Panc1 (cell line): ENCODE measurements at regions of chr16 and their contacts with region 1.

Region 1: DNA sequence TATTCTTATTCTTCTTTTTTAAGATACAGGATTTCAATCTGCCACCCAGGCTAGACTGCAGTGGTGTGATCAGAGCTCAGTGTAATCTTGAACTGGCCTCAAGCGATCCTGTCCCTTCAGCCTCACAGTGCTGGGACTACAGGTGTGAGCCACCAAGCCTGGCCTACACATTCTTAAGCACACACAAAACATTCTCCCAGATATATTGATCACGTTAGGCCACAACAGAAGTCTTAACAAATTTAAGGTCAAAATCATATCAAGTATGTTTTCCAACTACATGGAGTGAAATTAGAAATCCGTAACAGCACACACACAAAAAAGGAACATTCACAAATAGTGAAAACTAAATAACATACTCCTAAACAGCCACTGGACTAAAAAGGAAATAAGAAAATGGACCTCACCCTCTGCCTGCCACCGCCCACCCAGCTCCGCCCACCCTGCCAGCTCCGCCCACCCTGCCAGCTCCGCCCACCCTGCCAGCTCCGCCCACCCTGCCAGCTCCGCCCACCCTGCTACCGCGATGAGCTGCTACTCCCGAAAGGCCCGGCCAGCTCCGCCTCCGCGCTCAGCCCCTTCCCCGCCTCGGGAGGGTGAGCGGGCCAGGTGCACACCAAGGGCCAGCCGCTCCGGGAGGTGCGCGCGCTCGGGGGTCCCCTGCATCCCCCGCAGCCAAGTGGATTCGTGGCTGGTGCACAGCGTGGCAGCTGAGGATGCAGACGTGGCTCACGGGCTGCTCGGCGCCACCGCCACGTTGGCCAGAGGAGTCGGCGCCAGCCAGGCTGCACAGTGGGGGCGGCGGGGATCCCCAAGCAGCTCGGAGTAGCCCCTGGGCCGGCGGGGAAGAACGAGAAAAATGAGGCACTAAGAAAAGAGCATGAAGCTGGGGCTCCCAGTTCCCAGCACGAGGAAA is 41.2 kb downstream of the C16orf87 start:
- DNase-seq: no peak
- ATAC-seq: peak; percentile 98
- H3K4me3 ChIP-seq: peak overlapping the region; percentile 59 to 63
- H3K27ac ChIP-seq: peak overlapping the region; percentile 51; the same call in 1 of the 2 replicates
- H3K4me1 ChIP-seq: no peaks in the 10 kb centered on the region; the same call in 1 of the 2 replicates
- H3K27me3 ChIP-seq: no peaks in the 10 kb centered on the region
- CTCF ChIP-seq: no peak

Region 2: GRCh38 chr16:46673320-46674013 is 116.3 kb before region 1 on chr16:
- CTCF ChIA-PET with region 1: interaction called, 18 read pairs
- POLR2A ChIA-PET with region 1: no interaction called
- in situ Hi-C with region 1: no loop called
- intact Hi-C with region 1: no loop called
- DNase-seq: no peak
- ATAC-seq: peak; percentile 96
- H3K4me3 ChIP-seq: no peak overlapping the region
- H3K27ac ChIP-seq: no peak overlapping the region
- H3K4me1 ChIP-seq: no peaks in the 10 kb centered on the region
- H3K27me3 ChIP-seq: no peaks in the 10 kb centered on the region
- CTCF ChIP-seq: peak; percentile 92

Region 3: DNA sequence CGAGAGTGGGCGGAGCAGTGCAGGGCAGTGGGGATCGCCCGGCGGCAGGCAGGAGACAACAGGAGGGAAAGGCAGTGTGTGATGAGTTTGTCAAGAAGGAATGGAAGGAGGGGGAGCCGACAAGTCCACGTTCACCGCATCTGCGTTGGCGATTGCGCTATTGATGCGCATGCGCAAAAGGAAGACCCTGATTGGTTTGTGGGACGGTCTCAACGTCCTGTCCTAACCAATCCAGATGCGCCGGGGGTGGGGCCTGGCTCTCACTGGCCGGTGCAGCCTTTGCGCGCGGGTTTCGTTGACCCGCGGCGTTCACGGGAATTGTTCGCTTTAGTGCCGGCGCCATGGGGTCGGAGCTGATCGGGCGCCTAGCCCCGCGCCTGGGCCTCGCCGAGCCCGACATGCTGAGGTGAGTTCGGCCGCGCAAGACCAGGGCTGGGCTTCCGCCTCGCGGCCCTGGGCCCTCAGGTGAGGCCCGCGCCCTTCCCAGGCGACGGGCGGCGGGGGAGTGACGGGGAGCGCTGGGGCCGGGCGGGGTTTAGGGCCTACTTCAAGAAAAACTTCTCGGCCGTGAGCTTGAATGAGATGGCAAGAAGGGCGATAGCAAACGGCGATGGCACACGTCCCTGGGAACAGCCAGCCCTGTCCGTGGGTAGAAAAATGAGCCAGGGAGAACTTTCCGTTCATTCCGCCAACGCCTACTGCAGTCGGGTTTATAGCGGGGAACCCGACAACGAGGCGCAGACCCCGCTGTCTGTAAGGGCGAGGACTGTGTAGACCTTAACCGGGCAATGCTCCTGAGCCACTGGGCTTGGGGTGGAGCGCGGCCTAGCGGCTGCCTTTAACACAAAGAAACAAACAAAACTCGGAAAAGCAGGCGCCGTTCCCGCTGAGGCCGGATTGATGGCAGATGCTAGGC is 100.1 kb before region 1 on chr16 and contains the start of gene ORC6:
- CTCF ChIA-PET with region 1: no interaction called
- POLR2A ChIA-PET with region 1: no interaction called
- in situ Hi-C with region 1: no loop called
- intact Hi-C with region 1: loop called (anchors 5 kb)
- DNase-seq: peak; percentile 83
- ATAC-seq: peak; percentile 93
- H3K4me3 ChIP-seq: peak within 1 kb of the TSS; percentile 85 to 94
- H3K27ac ChIP-seq: peak within 1 kb of the TSS; percentile 91
- H3K4me1 ChIP-seq: peaks cover 25% of the 10 kb centered on the region
- H3K27me3 ChIP-seq: no peaks in the 10 kb centered on the region
- CTCF ChIP-seq: peak; percentile 55
- total RNA-seq, gene ORC6: 33.5 TPM

Region 4: GRCh38 chr16:46757339-46758050 is 32.3 kb before region 1 on chr16:
- CTCF ChIA-PET with region 1: interaction called, 14 read pairs
- POLR2A ChIA-PET with region 1: no interaction called
- in situ Hi-C with region 1: no loop called
- intact Hi-C with region 1: no loop called
- DNase-seq: no peak
- ATAC-seq: 0 out of 2 replicates have a peak, but pooled peaks have one; percentile 26
- H3K4me3 ChIP-seq: no peak overlapping the region
- H3K27ac ChIP-seq: no peak overlapping the region
- H3K4me1 ChIP-seq: no peaks in the 10 kb centered on the region
- H3K27me3 ChIP-seq: no peaks in the 10 kb centered on the region
- CTCF ChIP-seq: no peak